Activated CD4-positive, alpha-beta T cell treated with anti-CD3 and anti-CD28 coated beads for 36 hours (primary cell): ENCODE measurements at regions of chr5 and their contacts with region 1.

Region 1: GRCh38 chr5:39187831-39188731 is 31.3 kb downstream of the FYB1 start:
- DNase-seq: peak; percentile 45
- ATAC-seq: peak; percentile 38
- H3K4me3 Mint-ChIP-seq: peak overlapping the region; percentile 59
- H3K27ac Mint-ChIP-seq: peak overlapping the region; percentile 92
- H3K4me1 Mint-ChIP-seq: peaks cover 88% of the 10 kb centered on the region
- H3K27me3 Mint-ChIP-seq: no peaks in the 10 kb centered on the region

Region 2: GRCh38 chr5:39080597-39081204 is 107.4 kb before region 1 on chr5:
- CTCF ChIA-PET with region 1: no interaction called
- POLR2A ChIA-PET with region 1: no interaction called
- intact Hi-C with region 1: no loop called
- DNase-seq: peak; percentile 54
- ATAC-seq: no peak
- H3K4me3 Mint-ChIP-seq: no peak overlapping the region
- H3K27ac Mint-ChIP-seq: no peak overlapping the region
- H3K4me1 Mint-ChIP-seq: peaks cover 42% of the 10 kb centered on the region
- H3K27me3 Mint-ChIP-seq: peaks cover 11% of the 10 kb centered on the region

Region 3: GRCh38 chr5:39202597-39203274 is 14.7 kb after region 1 on chr5:
- CTCF ChIA-PET with region 1: interaction called, 20 read pairs
- POLR2A ChIA-PET with region 1: interaction called, 10 read pairs
- intact Hi-C with region 1: loop called in 1 of 2 experiments (anchors 2 kb)
- DNase-seq: peak; percentile 62
- ATAC-seq: peak; percentile 27
- H3K4me3 Mint-ChIP-seq: peak overlapping the region; percentile 81
- H3K27ac Mint-ChIP-seq: peak overlapping the region; percentile 93
- H3K4me1 Mint-ChIP-seq: peaks cover 36% of the 10 kb centered on the region
- H3K27me3 Mint-ChIP-seq: no peaks in the 10 kb centered on the region

Region 4: GRCh38 chr5:39209924-39210323 is 21.8 kb after region 1 on chr5:
- CTCF ChIA-PET with region 1: interaction called, 6 read pairs
- POLR2A ChIA-PET with region 1: interaction called, 3 read pairs
- intact Hi-C with region 1: loop called in 1 of 2 experiments (anchors 1 kb)
- DNase-seq: peak; percentile 87
- ATAC-seq: peak; percentile 59
- H3K4me3 Mint-ChIP-seq: peak overlapping the region; percentile 67
- H3K27ac Mint-ChIP-seq: peak overlapping the region; percentile 95
- H3K4me1 Mint-ChIP-seq: peaks cover 84% of the 10 kb centered on the region
- H3K27me3 Mint-ChIP-seq: no peaks in the 10 kb centered on the region

Region 5: DNA sequence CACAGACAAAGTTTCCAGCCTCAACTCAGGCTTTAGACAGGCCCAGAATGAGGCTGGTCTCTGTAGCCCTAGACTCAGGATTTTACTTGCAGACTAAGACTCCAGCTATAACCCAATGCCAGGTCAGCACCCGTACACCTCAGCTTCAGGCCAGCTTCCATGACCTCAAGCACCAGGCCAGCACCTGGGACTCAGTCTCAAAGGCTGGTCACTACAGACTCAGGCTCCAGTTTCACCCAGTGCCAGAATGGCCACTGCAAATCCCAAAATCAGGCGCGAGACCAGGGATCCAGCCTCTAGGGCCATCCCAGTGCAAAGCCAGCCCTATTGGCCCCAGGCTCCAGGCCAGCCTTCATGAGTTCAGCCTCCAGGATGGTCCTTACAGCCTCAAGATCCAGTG is 131.3 kb after region 1 on chr5:
- CTCF ChIA-PET with region 1: no interaction called
- POLR2A ChIA-PET with region 1: no interaction called
- intact Hi-C with region 1: no loop called
- DNase-seq: no peak
- ATAC-seq: no peak
- H3K4me3 Mint-ChIP-seq: no peak overlapping the region
- H3K27ac Mint-ChIP-seq: no peak overlapping the region
- H3K4me1 Mint-ChIP-seq: no peaks in the 10 kb centered on the region
- H3K27me3 Mint-ChIP-seq: peaks cover 6% of the 10 kb centered on the region